ENCODE measurements at regions of chr12 and their contacts with region 1.

Region 1: DNA sequence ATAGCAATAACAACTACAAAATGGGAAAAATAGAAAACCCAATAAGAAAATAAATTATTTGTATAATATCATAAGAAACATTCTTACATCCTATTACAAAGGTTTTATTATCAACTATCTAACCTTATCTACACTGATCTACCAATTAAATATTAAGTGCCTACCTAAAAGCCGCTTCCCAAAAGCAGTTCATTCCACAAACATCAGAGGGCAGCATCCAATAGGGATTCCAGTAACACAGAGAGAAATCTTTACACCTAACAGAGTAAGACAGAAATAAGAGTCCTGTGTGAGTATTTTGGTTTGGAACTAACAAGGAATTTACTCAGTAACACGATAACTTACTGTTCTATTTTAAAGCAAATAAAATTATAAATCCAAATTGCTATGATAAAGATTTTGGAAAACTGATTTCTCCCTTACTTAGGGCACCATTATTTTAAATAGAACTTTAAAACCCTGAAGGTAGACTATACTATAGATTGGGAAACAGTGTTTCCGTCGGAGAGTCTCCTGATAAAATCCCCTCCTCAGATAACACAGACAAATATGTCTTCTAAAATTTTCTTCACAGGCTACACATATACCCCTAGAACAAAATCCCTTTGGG is 15.0 kb downstream of the GXYLT1 start:
- H3K4me3 Mint-ChIP-seq: no peak overlapping the region
- H3K27ac Mint-ChIP-seq: no peak overlapping the region
- H3K4me1 Mint-ChIP-seq: peaks cover 17% of the 10 kb centered on the region
- H3K27me3 Mint-ChIP-seq: no peaks in the 10 kb centered on the region

Region 2: DNA sequence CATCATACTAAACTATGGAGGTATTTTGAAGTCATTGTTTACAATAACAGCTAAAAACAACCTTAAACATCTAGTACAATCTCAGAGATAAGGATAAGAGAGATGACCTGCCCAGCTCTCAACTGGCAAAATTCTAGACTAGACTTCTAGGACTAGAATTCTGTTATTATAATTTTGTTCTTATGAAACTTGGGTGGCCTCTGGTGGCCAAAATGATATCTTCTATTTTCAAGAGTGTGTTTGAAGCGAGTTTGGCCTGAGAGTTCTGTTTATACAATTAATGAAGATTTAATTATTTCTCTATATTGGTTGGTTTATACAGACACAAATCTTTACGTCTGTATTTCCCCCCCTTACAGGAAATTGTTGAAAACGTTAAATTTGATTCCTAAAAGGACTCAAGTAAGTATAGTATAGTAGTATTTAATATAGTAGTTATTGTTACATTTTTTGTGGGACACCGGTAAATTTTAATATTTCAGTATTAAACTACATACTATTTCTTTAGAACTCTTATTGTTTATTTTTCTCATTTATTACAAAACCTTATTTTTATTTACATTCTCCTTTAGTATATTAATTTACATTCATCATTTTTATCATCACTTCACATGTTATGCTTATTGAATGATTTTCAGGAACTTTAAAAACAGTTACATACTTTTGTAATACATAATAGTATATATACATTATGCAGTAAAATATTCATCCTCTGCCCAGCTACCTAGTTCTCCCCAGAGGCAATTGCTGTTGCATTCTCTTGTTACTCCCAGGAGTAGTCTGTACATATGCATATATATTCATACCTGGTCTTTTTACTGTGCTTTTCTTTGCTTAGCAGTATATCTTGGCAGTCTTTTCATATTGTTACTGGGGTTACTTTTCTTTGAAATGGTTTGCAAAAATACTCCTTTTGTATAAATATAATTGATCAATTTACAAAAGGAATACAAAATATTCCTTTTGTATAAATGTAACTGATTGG is 202.9 kb after region 1 on chr12:
- intact Hi-C with region 1: loop called (anchors 1 kb)
- H3K4me3 Mint-ChIP-seq: no peak overlapping the region
- H3K27ac Mint-ChIP-seq: no peak overlapping the region
- H3K4me1 Mint-ChIP-seq: peaks cover 48% of the 10 kb centered on the region
- H3K27me3 Mint-ChIP-seq: no peaks in the 10 kb centered on the region

Region 3: GRCh38 chr12:42372154-42372791 is 242.6 kb after region 1 on chr12:
- intact Hi-C with region 1: loop called (anchors 5 kb)
- H3K4me3 Mint-ChIP-seq: no peak overlapping the region
- H3K27ac Mint-ChIP-seq: no peak overlapping the region
- H3K4me1 Mint-ChIP-seq: peaks cover 7% of the 10 kb centered on the region
- H3K27me3 Mint-ChIP-seq: no peaks in the 10 kb centered on the region

Region 4: DNA sequence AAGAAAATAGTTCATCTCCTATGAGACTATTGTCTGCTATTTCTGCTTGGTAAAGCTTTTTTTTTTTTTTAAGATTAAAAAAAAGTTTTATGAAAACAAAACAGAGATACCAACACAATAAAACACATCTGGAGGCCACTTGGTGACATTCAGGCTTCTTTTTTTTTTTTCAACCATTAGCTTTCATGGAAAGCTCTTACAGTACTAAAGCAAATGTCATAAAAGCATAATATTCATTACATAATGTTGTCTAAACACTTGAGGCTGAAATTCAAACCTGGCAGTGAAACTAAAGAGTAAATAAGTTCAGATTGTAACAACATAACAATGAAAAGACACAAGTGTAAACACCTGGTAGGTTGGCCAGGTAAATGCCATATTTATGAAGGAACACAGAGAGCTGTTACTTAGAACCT is 445.2 kb after region 1 on chr12:
- intact Hi-C with region 1: loop called (anchors 10 kb)
- H3K4me3 Mint-ChIP-seq: no peak overlapping the region
- H3K27ac Mint-ChIP-seq: no peak overlapping the region
- H3K4me1 Mint-ChIP-seq: no peaks in the 10 kb centered on the region
- H3K27me3 Mint-ChIP-seq: peaks cover 1% of the 10 kb centered on the region

Measured in dendritic cell treated with granulocyte-macrophage colony-stimulating factor and Interleukin-4, amounts not matched to agents 40 ng/mL and 50 ng/mL, for 4 days (primary cell).